ENCODE measurements at regions of chr1 and their contacts with region 1.

Region 1: DNA sequence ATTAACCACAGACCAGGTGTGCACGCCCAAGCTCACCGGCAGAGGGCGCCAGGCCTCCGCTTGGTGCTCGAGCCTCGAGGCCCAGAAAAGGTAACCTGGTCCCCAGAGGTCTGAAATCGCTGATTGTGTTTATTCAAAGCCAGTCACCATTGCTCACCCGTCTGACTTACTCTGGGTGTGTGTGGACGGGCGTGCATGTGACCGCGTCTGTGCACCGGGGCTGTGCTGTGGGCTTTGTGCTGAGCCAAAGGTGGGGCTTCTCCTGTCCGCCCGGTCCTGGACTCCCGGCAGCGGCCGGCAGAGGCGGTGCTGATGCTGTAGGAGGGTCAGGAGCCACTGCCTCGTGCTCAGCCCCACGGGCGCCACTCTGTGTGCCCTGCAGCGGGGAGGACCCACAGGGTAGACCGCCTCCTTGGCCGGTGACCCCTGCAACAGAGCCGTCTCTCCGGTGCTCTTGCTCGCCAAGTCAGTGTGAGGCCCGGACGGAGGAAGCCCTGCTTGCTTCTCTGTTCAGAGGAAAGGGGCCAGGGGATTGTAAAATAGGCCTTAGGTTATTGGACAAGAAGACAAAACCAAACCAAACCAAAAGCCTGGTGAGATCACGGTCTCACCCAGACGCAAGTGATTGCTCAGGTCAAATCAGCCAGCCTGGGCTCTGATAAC is 32.0 kb upstream of the BTG2 start:
- DNase-seq: peak; percentile 94
- ATAC-seq: peak; percentile 86
- H3K4me3 ChIP-seq: peak overlapping the region; percentile 33
- H3K27ac ChIP-seq: peak overlapping the region; percentile 39
- H3K4me1 ChIP-seq: peaks cover 50% of the 10 kb centered on the region
- H3K27me3 ChIP-seq: no peaks in the 10 kb centered on the region
- CTCF ChIP-seq: peak; percentile 97

Region 2: GRCh38 chr1:202796302-202797069 is 476.9 kb before region 1 on chr1:
- intact Hi-C with region 1: no loop called
- DNase-seq: no peak
- ATAC-seq: peak; percentile 9
- H3K4me3 ChIP-seq: no peak overlapping the region
- H3K27ac ChIP-seq: no peak overlapping the region
- H3K4me1 ChIP-seq: no peaks in the 10 kb centered on the region
- H3K27me3 ChIP-seq: no peaks in the 10 kb centered on the region
- CTCF ChIP-seq: no peak

Region 3: GRCh38 chr1:203127666-203128430 is 145.5 kb before region 1 on chr1 and contains the start of gene ADORA1:
- intact Hi-C with region 1: no loop called
- DNase-seq: peak; percentile 85
- ATAC-seq: peak; percentile 85
- H3K4me3 ChIP-seq: peak within 1 kb of the TSS; percentile 46
- H3K27ac ChIP-seq: no peak within 1 kb of the TSS
- H3K4me1 ChIP-seq: peaks cover 41% of the 10 kb centered on the region
- H3K27me3 ChIP-seq: peaks cover 38% of the 10 kb centered on the region
- CTCF ChIP-seq: no peak
- total RNA-seq, gene ADORA1: 4.1 TPM

Region 4: DNA sequence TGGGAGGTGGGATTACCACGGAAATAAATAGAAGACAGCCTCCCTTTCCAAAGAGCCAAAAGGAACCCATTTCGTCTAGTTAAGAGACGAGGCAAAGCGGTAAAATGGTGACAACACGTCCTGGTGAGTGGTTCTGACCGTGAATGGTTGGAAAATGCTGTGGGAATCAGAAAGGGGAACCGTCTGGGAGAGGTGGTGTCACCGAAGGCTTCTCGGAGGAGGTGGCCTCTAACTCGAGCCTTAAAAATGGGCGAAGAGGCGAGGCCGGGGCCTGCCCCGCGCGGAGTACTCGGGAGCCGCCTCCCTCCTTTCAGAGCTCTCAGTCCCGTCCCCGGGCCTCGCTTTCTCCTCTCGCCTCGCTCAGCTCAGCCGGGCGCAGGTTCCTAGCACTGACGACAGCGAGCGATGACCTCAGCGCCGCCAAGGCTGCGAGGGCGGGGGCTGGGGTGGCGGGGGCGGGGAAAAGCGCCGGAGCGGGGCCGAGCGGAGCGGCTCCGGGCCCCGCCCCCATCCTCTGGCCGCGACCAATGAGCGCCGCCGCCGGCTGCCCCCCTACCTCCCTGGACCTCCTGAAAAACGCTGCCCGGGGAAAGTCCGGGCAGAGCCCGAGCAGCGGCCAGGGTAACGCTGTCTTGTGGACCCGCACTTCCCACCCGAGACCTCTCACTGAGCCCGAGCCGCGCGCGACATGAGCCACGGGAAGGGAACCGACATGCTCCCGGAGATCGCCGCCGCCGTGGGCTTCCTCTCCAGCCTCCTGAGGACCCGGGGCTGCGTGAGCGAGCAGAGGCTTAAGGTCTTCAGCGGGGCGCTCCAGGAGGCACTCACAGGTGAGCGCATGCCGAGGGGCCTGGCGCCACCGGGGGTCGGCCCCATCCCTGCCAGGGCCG is 31.8 kb after region 1 on chr1 and contains the start of gene BTG2:
- intact Hi-C with region 1: loop called (anchors 5 kb)
- DNase-seq: peak; percentile 96
- ATAC-seq: peak; percentile 93
- H3K4me3 ChIP-seq: peak within 1 kb of the TSS; percentile 98
- H3K27ac ChIP-seq: peak within 1 kb of the TSS; percentile 98
- H3K4me1 ChIP-seq: peaks cover 36% of the 10 kb centered on the region
- H3K27me3 ChIP-seq: no peaks in the 10 kb centered on the region
- CTCF ChIP-seq: no peak
- total RNA-seq, gene BTG2: 95.3 TPM

Region 5: GRCh38 chr1:203326830-203327683 is 53.7 kb after region 1 on chr1:
- intact Hi-C with region 1: no loop called
- DNase-seq: peak; percentile 98
- ATAC-seq: peak; percentile 89
- H3K4me3 ChIP-seq: peak overlapping the region; percentile 60
- H3K27ac ChIP-seq: peak overlapping the region; percentile 92
- H3K4me1 ChIP-seq: peaks cover 51% of the 10 kb centered on the region
- H3K27me3 ChIP-seq: no peaks in the 10 kb centered on the region
- CTCF ChIP-seq: no peak

Region 6: GRCh38 chr1:203340112-203340804 is 66.9 kb after region 1 on chr1:
- intact Hi-C with region 1: loop called (anchors 5 kb)
- DNase-seq: peak; percentile 72
- ATAC-seq: peak; percentile 87
- H3K4me3 ChIP-seq: no peak overlapping the region
- H3K27ac ChIP-seq: no peak overlapping the region
- H3K4me1 ChIP-seq: peaks cover 13% of the 10 kb centered on the region
- H3K27me3 ChIP-seq: no peaks in the 10 kb centered on the region
- CTCF ChIP-seq: peak; percentile 94

Region 7: DNA sequence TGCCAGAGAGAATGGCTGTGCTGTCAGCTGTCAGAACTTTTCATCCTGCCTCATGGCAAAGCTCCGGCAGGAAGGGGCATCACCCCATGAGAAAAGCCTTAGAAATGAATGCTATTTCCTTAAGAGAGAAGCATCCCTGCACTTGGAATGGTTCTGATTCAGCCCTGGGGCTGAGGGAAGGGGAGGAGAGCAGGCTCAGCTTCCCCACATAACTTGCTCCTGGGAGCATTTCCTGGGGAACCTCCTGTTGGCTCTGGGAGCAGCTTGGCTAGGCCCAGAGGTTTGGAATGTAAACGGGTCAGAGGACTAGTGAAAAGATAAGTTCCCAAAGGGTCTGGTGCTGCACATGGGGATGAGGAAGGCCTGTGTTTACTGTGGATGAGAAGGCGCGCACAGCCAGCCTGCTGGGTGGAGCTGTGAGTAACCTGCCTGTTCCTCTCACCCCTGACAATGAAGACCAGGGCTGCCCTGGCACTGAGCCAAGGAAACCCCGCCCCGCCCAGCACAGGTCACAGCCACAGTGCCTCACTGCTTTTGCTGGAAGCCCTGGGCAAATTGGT is 207.3 kb after region 1 on chr1:
- intact Hi-C with region 1: loop called (anchors 10 kb)
- DNase-seq: peak; percentile 84
- ATAC-seq: peak; percentile 76
- H3K4me3 ChIP-seq: peak overlapping the region; percentile 46
- H3K27ac ChIP-seq: peak overlapping the region; percentile 60
- H3K4me1 ChIP-seq: peaks cover 19% of the 10 kb centered on the region
- H3K27me3 ChIP-seq: no peaks in the 10 kb centered on the region
- CTCF ChIP-seq: no peak

Region 8: GRCh38 chr1:204128964-204129896 is 855.9 kb after region 1 on chr1:
- intact Hi-C with region 1: no loop called
- DNase-seq: peak; percentile 90
- ATAC-seq: peak; percentile 90
- H3K4me3 ChIP-seq: peak overlapping the region; percentile 25
- H3K27ac ChIP-seq: peak overlapping the region; percentile 6
- H3K4me1 ChIP-seq: peaks cover 13% of the 10 kb centered on the region
- H3K27me3 ChIP-seq: no peaks in the 10 kb centered on the region
- CTCF ChIP-seq: peak; percentile 91